ENCODE measurements at regions of chr10 and their contacts with region 1.

Region 1: GRCh38 chr10:7538970-7539667 is 127.6 kb downstream of the ITIH5 start:
- DNase-seq: no peak
- H3K4me3 ChIP-seq: no peak overlapping the region
- H3K27ac ChIP-seq: no peak overlapping the region
- H3K4me1 ChIP-seq: no peaks in the 10 kb centered on the region
- H3K27me3 ChIP-seq: no peaks in the 10 kb centered on the region
- CTCF ChIP-seq: no peak

Region 2: DNA sequence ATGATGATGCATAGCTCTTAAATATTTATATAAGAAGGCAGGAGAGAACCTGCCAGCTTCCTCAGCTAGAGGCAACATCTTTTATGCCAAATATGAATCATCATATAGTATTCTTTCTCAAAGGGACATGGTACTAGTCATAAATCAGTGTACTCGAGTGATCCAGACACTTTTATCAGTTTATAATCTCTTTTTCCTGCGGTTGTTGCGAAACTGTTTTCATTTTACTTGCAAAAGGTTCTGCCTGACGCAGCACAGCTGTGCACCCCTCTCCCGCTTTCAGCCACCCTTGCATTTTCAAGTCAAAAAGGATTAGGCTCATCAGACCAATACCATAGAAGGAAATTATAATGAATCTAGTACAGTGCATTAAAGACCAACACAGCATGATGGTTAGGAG is 626.7 kb before region 1 on chr10:
- CTCF ChIA-PET with region 1: no interaction called
- dilution Hi-C with region 1: no loop called
- in situ Hi-C with region 1: no loop called
- intact Hi-C with region 1: no loop called
- DNase-seq: peak; percentile 92
- H3K4me3 ChIP-seq: no peak overlapping the region
- H3K27ac ChIP-seq: no peak overlapping the region
- H3K4me1 ChIP-seq: peaks cover 13% of the 10 kb centered on the region
- H3K27me3 ChIP-seq: peaks cover 13% of the 10 kb centered on the region
- CTCF ChIP-seq: no peak

Region 3: GRCh38 chr10:7572391-7572790 is 33.3 kb after region 1 on chr10:
- CTCF ChIA-PET with region 1: no interaction called
- dilution Hi-C with region 1: loop called (anchors 5 kb)
- in situ Hi-C with region 1: no loop called
- intact Hi-C with region 1: no loop called
- DNase-seq: no peak
- H3K4me3 ChIP-seq: no peak overlapping the region
- H3K27ac ChIP-seq: no peak overlapping the region
- H3K4me1 ChIP-seq: no peaks in the 10 kb centered on the region
- H3K27me3 ChIP-seq: no peaks in the 10 kb centered on the region
- CTCF ChIP-seq: no peak

Measured in mammary epithelial cell (primary cell).